BJ (cell line): ENCODE measurements at regions of chr7 and their contacts with region 1.

Region 1: GRCh38 chr7:74026903-74027551 is 946 bp upstream of the ELN start:
- DNase-seq: no peak
- H3K4me3 ChIP-seq: no peak overlapping the region
- H3K27me3 ChIP-seq: no peaks in the 10 kb centered on the region
- CTCF ChIP-seq: peak; percentile 96

Region 2: GRCh38 chr7:73872056-73872908 is 154.7 kb before region 1 on chr7:
- CTCF ChIA-PET with region 1: interaction called, 22 read pairs
- POLR2A ChIA-PET with region 1: no interaction called
- DNase-seq: no peak
- H3K4me3 ChIP-seq: no peak overlapping the region
- H3K27me3 ChIP-seq: no peaks in the 10 kb centered on the region
- CTCF ChIP-seq: no peak

Region 3: GRCh38 chr7:73894733-73895551 is 132.1 kb before region 1 on chr7:
- CTCF ChIA-PET with region 1: interaction called, 14 read pairs
- POLR2A ChIA-PET with region 1: no interaction called
- DNase-seq: peak; percentile 99
- H3K4me3 ChIP-seq: no peak overlapping the region
- H3K27me3 ChIP-seq: no peaks in the 10 kb centered on the region
- CTCF ChIP-seq: peak; percentile 18; the same call in 1 of the 2 replicates

Region 4: GRCh38 chr7:74012842-74013249 is 14.2 kb before region 1 on chr7:
- CTCF ChIA-PET with region 1: interaction called, 43 read pairs
- POLR2A ChIA-PET with region 1: no interaction called
- DNase-seq: no peak
- H3K4me3 ChIP-seq: no peak overlapping the region
- H3K27me3 ChIP-seq: no peaks in the 10 kb centered on the region
- CTCF ChIP-seq: no peak

Region 5: GRCh38 chr7:74059681-74060578 is 32.9 kb after region 1 on chr7:
- CTCF ChIA-PET with region 1: interaction called, 10 read pairs
- POLR2A ChIA-PET with region 1: no interaction called
- DNase-seq: no peak
- H3K4me3 ChIP-seq: no peak overlapping the region
- H3K27me3 ChIP-seq: no peaks in the 10 kb centered on the region
- CTCF ChIP-seq: peak; percentile 8; the same call in 1 of the 2 replicates